ENCODE measurements at regions of chr3 and their contacts with region 1.

Region 1: GRCh38 chr3:78988324-78988723 is 779.5 kb downstream of the ROBO1 start:
- DNase-seq: no peak
- H3K4me3 ChIP-seq: no peak overlapping the region
- H3K27ac ChIP-seq: no peak overlapping the region
- H3K27me3 ChIP-seq: no peaks in the 10 kb centered on the region
- CTCF ChIP-seq: peak; percentile 56

Region 2: DNA sequence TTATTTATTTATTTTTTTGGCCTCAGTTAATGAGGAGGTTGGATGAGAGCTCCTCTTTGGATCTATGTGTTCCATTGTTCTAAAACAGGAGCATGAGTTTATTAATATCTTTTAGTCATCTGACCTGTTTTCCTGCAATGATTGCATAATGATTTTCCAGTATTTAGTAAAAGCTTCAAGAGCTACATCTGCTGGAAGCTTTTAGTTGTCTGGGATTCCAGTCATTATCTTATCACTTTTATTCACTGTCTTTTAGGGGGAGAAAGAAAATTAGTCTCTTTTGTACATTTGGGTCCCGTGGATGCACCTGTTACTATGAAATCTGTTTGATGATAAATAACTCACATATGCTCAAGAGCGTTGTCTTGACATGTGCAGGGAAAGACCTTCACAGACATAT is 490.6 kb before region 1 on chr3:
- CTCF ChIA-PET with region 1: no interaction called
- POLR2A ChIA-PET with region 1: no interaction called
- DNase-seq: no peak
- H3K4me3 ChIP-seq: no peak overlapping the region
- H3K27ac ChIP-seq: no peak overlapping the region
- H3K27me3 ChIP-seq: no peaks in the 10 kb centered on the region
- CTCF ChIP-seq: no peak

Region 3: GRCh38 chr3:78659386-78659987 is 328.8 kb before region 1 on chr3:
- CTCF ChIA-PET with region 1: interaction called, 16 read pairs
- POLR2A ChIA-PET with region 1: no interaction called
- DNase-seq: peak; percentile 23
- H3K4me3 ChIP-seq: no peak overlapping the region
- H3K27ac ChIP-seq: no peak overlapping the region
- H3K27me3 ChIP-seq: no peaks in the 10 kb centered on the region
- CTCF ChIP-seq: peak; percentile 60

Region 4: GRCh38 chr3:78978037-78978436 is 10.3 kb before region 1 on chr3:
- CTCF ChIA-PET with region 1: interaction called, 12 read pairs
- POLR2A ChIA-PET with region 1: no interaction called
- DNase-seq: no peak
- H3K4me3 ChIP-seq: no peak overlapping the region
- H3K27ac ChIP-seq: no peak overlapping the region
- H3K27me3 ChIP-seq: no peaks in the 10 kb centered on the region
- CTCF ChIP-seq: peak; percentile 66